GM12878 (cell line): ENCODE measurements at regions of chr6 and their contacts with region 1.

Region 1: GRCh38 chr6:117602151-117602898 is at the start of gene GOPC:
- DNase-seq: peak; percentile 93
- ATAC-seq: peak; percentile 93
- H3K4me3 ChIP-seq: peak within 1 kb of the TSS; percentile 94
- H3K27ac ChIP-seq: peak within 1 kb of the TSS; percentile 79
- H3K4me1 ChIP-seq: peaks cover 3% of the 10 kb centered on the region; the same call in 1 of the 2 replicates
- H3K27me3 ChIP-seq: no peaks in the 10 kb centered on the region
- CTCF ChIP-seq: peak in 1 of 3 experiments; percentile 16; a peak in 1 of 6 replicates
- EP300 ChIP-seq: no peak
- POLR2A ChIP-seq: peak; percentile 98
- RAD21 ChIP-seq: no peak
- polyA plus RNA-seq, gene GOPC: 5.8 to 8.2 TPM

Region 2: GRCh38 chr6:117352466-117353081 is 249.8 kb before region 1 on chr6:
- CTCF ChIA-PET with region 1: interaction called, 12 read pairs
- POLR2A ChIA-PET with region 1: no interaction called
- RAD21 ChIA-PET with region 1: no interaction called
- SMC1A ChIA-PET with region 1: interaction called, 3 read pairs
- in situ Hi-C with region 1: no loop called
- intact Hi-C with region 1: loop called (anchors 1 kb)
- DNase-seq: no peak
- ATAC-seq: peak; percentile 70
- H3K4me3 ChIP-seq: no peak overlapping the region
- H3K27ac ChIP-seq: no peak overlapping the region
- H3K4me1 ChIP-seq: no peaks in the 10 kb centered on the region
- H3K27me3 ChIP-seq: no peaks in the 10 kb centered on the region
- CTCF ChIP-seq: peak; percentile 32 to 49 (median 36); a peak in 4 of 6 replicates
- EP300 ChIP-seq: no peak
- POLR2A ChIP-seq: no peak
- RAD21 ChIP-seq: peak; percentile 41; the same call in 1 of the 2 replicates

Region 3: GRCh38 chr6:117449549-117450439 is 152.5 kb before region 1 on chr6:
- CTCF ChIA-PET with region 1: interaction called, 121 read pairs
- POLR2A ChIA-PET with region 1: no interaction called
- RAD21 ChIA-PET with region 1: interaction called, 71 read pairs
- SMC1A ChIA-PET with region 1: interaction called, 61 read pairs
- in situ Hi-C with region 1: no loop called
- intact Hi-C with region 1: loop called (anchors 1 kb)
- DNase-seq: peak; percentile 12
- ATAC-seq: peak; percentile 62
- H3K4me3 ChIP-seq: no peak overlapping the region
- H3K27ac ChIP-seq: no peak overlapping the region
- H3K4me1 ChIP-seq: no peaks in the 10 kb centered on the region
- H3K27me3 ChIP-seq: no peaks in the 10 kb centered on the region
- CTCF ChIP-seq: peak; percentile 59 to 68 (median 59); a peak in 5 of 6 replicates
- EP300 ChIP-seq: no peak
- POLR2A ChIP-seq: no peak
- RAD21 ChIP-seq: peak; percentile 86

Region 4: GRCh38 chr6:117555882-117556498 is 46.3 kb before region 1 on chr6:
- CTCF ChIA-PET with region 1: interaction called, 35 read pairs
- POLR2A ChIA-PET with region 1: interaction called, 4 read pairs
- RAD21 ChIA-PET with region 1: interaction called, 5 read pairs
- SMC1A ChIA-PET with region 1: interaction called, 5 read pairs
- in situ Hi-C with region 1: no loop called
- intact Hi-C with region 1: loop called (anchors 1 kb)
- DNase-seq: no peak
- ATAC-seq: peak; percentile 68
- H3K4me3 ChIP-seq: no peak overlapping the region
- H3K27ac ChIP-seq: no peak overlapping the region
- H3K4me1 ChIP-seq: no peaks in the 10 kb centered on the region
- H3K27me3 ChIP-seq: no peaks in the 10 kb centered on the region
- CTCF ChIP-seq: peak; percentile 57 to 71 (median 63)
- EP300 ChIP-seq: no peak
- POLR2A ChIP-seq: no peak
- RAD21 ChIP-seq: peak; percentile 78

Region 5: DNA sequence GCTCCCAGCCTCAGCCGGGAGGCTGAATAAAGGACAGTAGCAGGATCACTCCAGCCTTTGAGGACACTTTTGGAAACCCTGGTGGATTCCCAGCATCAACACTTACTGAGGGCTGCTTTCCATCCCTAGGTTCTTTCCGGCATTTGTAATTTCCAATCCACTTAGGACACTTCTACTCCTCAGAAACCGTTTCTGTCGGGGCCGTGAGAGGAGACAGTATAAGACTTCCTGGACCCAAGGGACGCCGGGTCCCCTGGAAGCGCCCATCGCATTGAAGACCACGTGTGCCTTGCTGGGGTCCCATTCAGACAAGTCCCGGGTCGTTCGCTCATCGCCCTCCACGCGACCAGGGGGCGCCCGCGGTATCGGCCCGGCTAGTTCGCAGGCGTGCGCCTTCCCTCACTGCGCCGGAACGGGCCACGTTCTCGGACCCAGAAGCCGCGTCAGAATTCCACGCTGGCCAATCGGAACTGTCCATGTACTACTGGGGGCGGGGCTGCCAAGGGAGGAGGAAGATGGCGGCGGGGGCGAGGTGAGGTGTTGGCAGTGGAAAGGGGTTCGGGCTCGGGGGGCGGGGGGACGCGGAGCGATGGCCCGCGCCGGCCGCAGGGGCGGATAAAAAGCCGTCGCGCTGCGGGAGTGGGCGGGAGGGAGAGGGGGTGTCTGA is 72.8 kb after region 1 on chr6 and contains the start of gene NUS1:
- CTCF ChIA-PET with region 1: interaction called, 4 read pairs
- POLR2A ChIA-PET with region 1: interaction called, 3 read pairs
- RAD21 ChIA-PET with region 1: no interaction called
- SMC1A ChIA-PET with region 1: interaction called, 6 read pairs
- in situ Hi-C with region 1: no loop called
- intact Hi-C with region 1: loop called (anchors 1 kb)
- DNase-seq: peak; percentile 88
- ATAC-seq: peak; percentile 94
- H3K4me3 ChIP-seq: peak within 1 kb of the TSS; percentile 86
- H3K27ac ChIP-seq: peak within 1 kb of the TSS; percentile 82
- H3K4me1 ChIP-seq: no peaks in the 10 kb centered on the region
- H3K27me3 ChIP-seq: no peaks in the 10 kb centered on the region
- CTCF ChIP-seq: peak; percentile 81 to 93 (median 81); a peak in 5 of 6 replicates
- EP300 ChIP-seq: no peak
- POLR2A ChIP-seq: peak; percentile 56
- RAD21 ChIP-seq: no peak
- polyA plus RNA-seq, gene NUS1: 16.7 to 22.0 TPM

Region 6: GRCh38 chr6:117870486-117871242 is 268.3 kb after region 1 on chr6:
- CTCF ChIA-PET with region 1: no interaction called
- POLR2A ChIA-PET with region 1: no interaction called
- RAD21 ChIA-PET with region 1: no interaction called
- SMC1A ChIA-PET with region 1: no interaction called
- in situ Hi-C with region 1: no loop called
- intact Hi-C with region 1: no loop called
- DNase-seq: no peak
- ATAC-seq: peak; percentile 57
- H3K4me3 ChIP-seq: no peak overlapping the region
- H3K27ac ChIP-seq: no peak overlapping the region
- H3K4me1 ChIP-seq: no peaks in the 10 kb centered on the region
- H3K27me3 ChIP-seq: no peaks in the 10 kb centered on the region
- CTCF ChIP-seq: no peak
- EP300 ChIP-seq: no peak
- POLR2A ChIP-seq: no peak
- RAD21 ChIP-seq: no peak

Region 7: DNA sequence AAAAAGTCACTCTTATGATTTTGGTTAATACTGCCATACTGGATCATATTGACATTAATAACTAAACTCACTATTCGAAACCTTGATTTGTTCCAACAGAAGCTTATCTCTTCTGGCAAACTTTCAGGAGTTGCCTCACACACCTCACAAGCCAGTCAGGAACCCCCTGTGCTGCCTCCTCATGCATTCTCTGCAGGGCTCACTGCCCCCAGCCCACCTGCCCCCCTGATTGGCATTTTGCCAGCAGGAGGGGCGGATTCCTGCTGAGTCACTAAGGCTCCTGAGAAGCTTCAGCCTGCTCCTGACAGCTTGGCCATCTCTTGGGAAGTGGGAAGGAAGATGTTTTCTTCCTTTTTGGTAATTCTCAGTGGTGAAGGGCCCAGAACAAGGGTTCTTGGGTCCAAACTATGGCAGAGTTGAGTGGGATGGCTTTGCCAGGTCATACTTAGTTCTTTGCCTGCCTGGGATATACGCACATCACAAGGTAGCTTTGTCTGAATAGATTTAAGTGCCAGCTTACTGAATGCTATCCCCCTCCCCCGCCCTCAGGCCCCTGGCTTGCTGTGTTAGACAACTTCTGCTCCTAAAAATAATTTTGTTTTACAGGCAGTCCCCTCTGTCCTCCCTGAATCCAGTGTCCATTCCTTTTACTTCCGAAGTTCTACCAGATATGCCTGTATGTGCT is 336.1 kb after region 1 on chr6:
- CTCF ChIA-PET with region 1: no interaction called
- POLR2A ChIA-PET with region 1: no interaction called
- RAD21 ChIA-PET with region 1: no interaction called
- SMC1A ChIA-PET with region 1: no interaction called
- in situ Hi-C with region 1: no loop called
- intact Hi-C with region 1: no loop called
- DNase-seq: no peak
- ATAC-seq: no peak
- H3K4me3 ChIP-seq: no peak overlapping the region
- H3K27ac ChIP-seq: no peak overlapping the region
- H3K4me1 ChIP-seq: no peaks in the 10 kb centered on the region
- H3K27me3 ChIP-seq: no peaks in the 10 kb centered on the region
- CTCF ChIP-seq: no peak
- EP300 ChIP-seq: no peak
- POLR2A ChIP-seq: no peak
- RAD21 ChIP-seq: no peak